ENCODE measurements at regions of chr3 and their contacts with region 1.

Region 1: DNA sequence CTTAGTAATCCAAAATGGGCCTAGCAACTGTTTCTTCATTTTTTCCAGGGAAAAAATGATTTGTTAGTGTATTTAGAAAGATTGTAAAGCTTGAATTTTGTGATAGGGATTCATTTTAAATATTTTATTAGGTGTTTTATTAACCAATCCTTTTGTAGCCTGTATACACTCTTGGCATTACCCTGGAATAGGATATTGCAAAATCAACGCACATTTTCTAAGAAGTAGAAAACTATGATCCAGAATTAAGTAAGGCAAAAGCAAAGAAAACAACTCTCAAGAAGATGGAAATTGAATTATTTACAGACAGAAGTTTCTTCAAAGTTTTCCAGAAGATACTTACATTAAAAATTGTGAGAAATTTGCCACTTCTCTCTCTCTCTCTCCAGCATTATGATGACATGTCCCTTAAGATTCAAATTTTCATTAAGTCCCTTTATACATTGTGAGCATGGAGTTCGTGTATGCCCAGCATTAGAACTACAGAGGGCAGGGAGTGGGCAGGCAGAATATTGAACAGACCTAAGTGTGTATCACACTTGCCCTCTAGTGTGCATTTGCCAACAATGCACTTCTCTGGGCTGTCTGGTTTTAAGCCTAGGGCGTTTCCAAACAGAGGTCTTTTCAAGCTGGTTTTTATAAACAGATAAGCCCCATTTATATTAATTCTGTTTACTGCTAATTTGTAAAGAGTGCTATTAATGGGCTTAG is 28.5 kb upstream of the CMSS1 start:
- DNase-seq: peak; percentile 34 to 46
- H3K4me3 ChIP-seq: no peak overlapping the region
- H3K27ac ChIP-seq: no peak overlapping the region
- H3K4me1 ChIP-seq: no peaks in the 10 kb centered on the region
- H3K27me3 ChIP-seq: no peaks in the 10 kb centered on the region
- CTCF ChIP-seq: peak; percentile 89

Region 2: GRCh38 chr3:99114565-99115291 is 674.4 kb before region 1 on chr3:
- CTCF ChIA-PET with region 1: no interaction called
- POLR2A ChIA-PET with region 1: no interaction called
- intact Hi-C with region 1: loop called (anchors 10 kb)
- DNase-seq: peak in 1 of 2 experiments; percentile 19
- H3K4me3 ChIP-seq: no peak overlapping the region
- H3K27ac ChIP-seq: no peak overlapping the region
- H3K4me1 ChIP-seq: no peaks in the 10 kb centered on the region
- H3K27me3 ChIP-seq: no peaks in the 10 kb centered on the region
- CTCF ChIP-seq: peak; percentile 91

Region 3: DNA sequence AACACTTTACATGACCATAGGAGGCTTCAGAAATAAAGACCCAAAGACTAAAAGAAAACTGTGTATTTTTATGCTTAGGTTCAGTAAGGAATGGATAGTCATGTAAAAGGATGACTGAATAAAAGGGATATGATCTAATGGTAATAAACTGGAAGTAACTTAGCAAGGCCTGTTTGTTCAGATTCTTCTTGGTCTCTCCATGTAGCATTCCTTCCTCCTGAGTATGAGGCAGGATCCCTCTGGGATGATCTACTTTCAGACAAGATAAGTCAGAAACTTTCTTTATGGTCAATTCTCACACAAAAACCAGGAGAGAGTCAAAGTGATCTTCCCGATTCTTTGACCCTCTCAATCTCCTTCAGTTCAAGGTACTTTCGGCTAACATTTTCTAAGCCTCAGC is 546.9 kb before region 1 on chr3:
- CTCF ChIA-PET with region 1: no interaction called
- POLR2A ChIA-PET with region 1: no interaction called
- intact Hi-C with region 1: no loop called
- DNase-seq: no peak
- H3K4me3 ChIP-seq: no peak overlapping the region
- H3K27ac ChIP-seq: no peak overlapping the region
- H3K4me1 ChIP-seq: peaks cover 12% of the 10 kb centered on the region
- H3K27me3 ChIP-seq: no peaks in the 10 kb centered on the region
- CTCF ChIP-seq: no peak